ENCODE measurements at regions of chr10 and their contacts with region 1.

Region 1: DNA sequence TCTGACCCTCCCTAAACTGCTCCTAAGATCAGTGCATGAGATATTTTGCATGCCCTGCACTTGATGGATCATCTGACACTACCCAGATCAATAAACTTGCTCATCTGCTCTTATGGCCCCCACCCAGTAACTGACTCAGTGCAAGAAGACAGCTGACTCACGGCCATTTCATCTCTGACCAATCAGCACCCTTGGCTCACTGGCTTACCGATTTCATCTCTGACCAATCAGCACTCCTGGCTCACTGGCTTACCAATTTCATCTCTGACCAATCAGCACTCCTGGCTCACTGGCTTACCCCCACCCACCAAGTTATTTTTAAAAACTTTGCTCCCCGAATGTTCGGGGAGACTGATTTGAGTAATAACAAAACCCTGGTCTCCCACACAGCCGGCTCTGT is 37.2 kb upstream of the OPTN start:
- DNase-seq: no peak
- ATAC-seq: no peak
- H3K4me3 ChIP-seq: no peak overlapping the region
- H3K27ac ChIP-seq: no peak overlapping the region
- H3K4me1 ChIP-seq: no peaks in the 10 kb centered on the region
- H3K27me3 ChIP-seq: peaks cover 0 to 16% (median 9%) of the 10 kb centered on the region in 7 donors
- CTCF ChIP-seq: no peak

Region 2: GRCh38 chr10:12720217-12720981 is 342.4 kb before region 1 on chr10:
- intact Hi-C with region 1: loop called in 2 of 10 experiments (anchors 10 kb)
- DNase-seq: peak; percentile 54 to 63
- ATAC-seq: peak in 7 of 8 donors; percentile 70 to 93 (median 78)
- H3K4me3 ChIP-seq: no peak overlapping the region
- H3K27ac ChIP-seq: peak overlapping the region in 3 of 10 donors; percentile 24 to 42 (median 42)
- H3K4me1 ChIP-seq: peaks cover 0 to 21% (median 15%) of the 10 kb centered on the region in 9 donors
- H3K27me3 ChIP-seq: no peaks in the 10 kb centered on the region
- CTCF ChIP-seq: no peak

Measured in heart right ventricle (tissue), 16 donors.